WTC11 (cell line): ENCODE measurements at regions of chr19 and their contacts with region 1.

Region 1: GRCh38 chr19:41000310-41000737 is 9.2 kb downstream of the CYP2B6 start:
- DNase-seq: no peak
- ATAC-seq: no peak
- H3K4me3 Mint-ChIP-seq: no peak overlapping the region
- H3K27ac Mint-ChIP-seq: no peak overlapping the region
- H3K4me1 Mint-ChIP-seq: peaks cover 36% of the 10 kb centered on the region
- H3K27me3 Mint-ChIP-seq: peaks cover 4% of the 10 kb centered on the region; the same call in 1 of the 2 replicates
- CTCF ChIP-seq: no peak

Region 2: GRCh38 chr19:40982594-40983101 is 17.7 kb before region 1 on chr19:
- CTCF ChIA-PET with region 1: interaction called, 10 read pairs
- POLR2A ChIA-PET with region 1: no interaction called
- DNase-seq: peak; percentile 43
- ATAC-seq: peak; percentile 85
- H3K4me3 Mint-ChIP-seq: peak overlapping the region; percentile 31
- H3K27ac Mint-ChIP-seq: peak overlapping the region; percentile 89
- H3K4me1 Mint-ChIP-seq: peaks cover 56% of the 10 kb centered on the region
- H3K27me3 Mint-ChIP-seq: peaks cover 25% of the 10 kb centered on the region
- CTCF ChIP-seq: no peak

Region 3: GRCh38 chr19:41011249-41011648 is 10.9 kb after region 1 on chr19:
- CTCF ChIA-PET with region 1: no interaction called
- POLR2A ChIA-PET with region 1: no interaction called
- DNase-seq: no peak
- ATAC-seq: no peak
- H3K4me3 Mint-ChIP-seq: no peak overlapping the region
- H3K27ac Mint-ChIP-seq: no peak overlapping the region
- H3K4me1 Mint-ChIP-seq: peaks cover 11% of the 10 kb centered on the region
- H3K27me3 Mint-ChIP-seq: peaks cover 8% of the 10 kb centered on the region
- CTCF ChIP-seq: no peak